ENCODE measurements at regions of chr6 and their contacts with region 1.

Region 1: GRCh38 chr6:12289933-12290820 is at the start of gene EDN1:
- DNase-seq: peak; percentile 84
- ATAC-seq: peak; percentile 88
- H3K4me3 ChIP-seq: peak within 1 kb of the TSS; percentile 74
- H3K27ac ChIP-seq: peak within 1 kb of the TSS; percentile 83
- H3K4me1 ChIP-seq: peaks cover 12% of the 10 kb centered on the region
- H3K27me3 ChIP-seq: no peaks in the 10 kb centered on the region
- CTCF ChIP-seq: peak; percentile 45
- POLR2A ChIP-seq: peak; percentile 89
- RAD21 ChIP-seq: peak; percentile 52
- total RNA-seq, gene EDN1: 5.6 and 8.6 TPM in 2 replicates

Region 2: GRCh38 chr6:10999994-11000393 is 1290.2 kb before region 1 on chr6:
- CTCF ChIA-PET with region 1: no interaction called
- POLR2A ChIA-PET with region 1: no interaction called
- dilution Hi-C with region 1: no loop called
- in situ Hi-C with region 1: no loop called
- intact Hi-C with region 1: no loop called
- DNase-seq: peak; percentile 90
- ATAC-seq: peak; percentile 92
- H3K4me3 ChIP-seq: no peak overlapping the region
- H3K27ac ChIP-seq: no peak overlapping the region
- H3K4me1 ChIP-seq: no peaks in the 10 kb centered on the region; the same call in 1 of the 2 replicates
- H3K27me3 ChIP-seq: no peaks in the 10 kb centered on the region
- CTCF ChIP-seq: no peak
- POLR2A ChIP-seq: no peak
- RAD21 ChIP-seq: no peak

Region 3: GRCh38 chr6:11770546-11771466 is 519.4 kb before region 1 on chr6:
- CTCF ChIA-PET with region 1: no interaction called
- POLR2A ChIA-PET with region 1: no interaction called
- dilution Hi-C with region 1: no loop called
- in situ Hi-C with region 1: no loop called
- intact Hi-C with region 1: loop called (anchors 5 kb)
- DNase-seq: peak; percentile 100
- ATAC-seq: peak; percentile 81
- H3K4me3 ChIP-seq: no peak overlapping the region
- H3K27ac ChIP-seq: peak overlapping the region; percentile 81
- H3K4me1 ChIP-seq: peaks cover 36% of the 10 kb centered on the region
- H3K27me3 ChIP-seq: no peaks in the 10 kb centered on the region
- CTCF ChIP-seq: no peak
- POLR2A ChIP-seq: peak; percentile 74; the same call in 1 of the 2 replicates
- RAD21 ChIP-seq: no peak; the same call in none of the 2 replicates

Region 4: DNA sequence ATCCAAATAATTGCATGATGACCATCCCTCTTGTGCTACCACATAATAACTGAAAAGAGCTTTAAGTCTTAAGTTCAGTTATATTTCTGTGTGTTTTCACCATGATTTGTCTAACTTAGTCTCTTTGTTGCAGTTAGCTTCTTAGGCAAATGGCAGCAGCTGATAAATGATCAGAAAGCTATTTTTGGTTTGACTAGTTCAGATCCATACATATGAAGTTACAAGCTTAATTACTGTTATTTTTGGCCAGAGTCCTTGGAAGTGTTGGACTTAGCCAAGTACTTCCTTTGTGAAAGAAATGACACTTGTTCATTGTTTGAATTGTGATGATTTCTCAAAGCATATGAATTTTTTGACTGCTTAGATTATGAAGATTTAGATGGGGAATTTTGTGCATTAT is 223.9 kb before region 1 on chr6:
- CTCF ChIA-PET with region 1: no interaction called
- POLR2A ChIA-PET with region 1: no interaction called
- dilution Hi-C with region 1: no loop called
- in situ Hi-C with region 1: no loop called
- intact Hi-C with region 1: no loop called
- DNase-seq: peak; percentile 19
- ATAC-seq: no peak
- H3K4me3 ChIP-seq: no peak overlapping the region
- H3K27ac ChIP-seq: no peak overlapping the region
- H3K4me1 ChIP-seq: peaks cover 11% of the 10 kb centered on the region
- H3K27me3 ChIP-seq: no peaks in the 10 kb centered on the region
- CTCF ChIP-seq: no peak
- POLR2A ChIP-seq: no peak
- RAD21 ChIP-seq: no peak

Region 5: DNA sequence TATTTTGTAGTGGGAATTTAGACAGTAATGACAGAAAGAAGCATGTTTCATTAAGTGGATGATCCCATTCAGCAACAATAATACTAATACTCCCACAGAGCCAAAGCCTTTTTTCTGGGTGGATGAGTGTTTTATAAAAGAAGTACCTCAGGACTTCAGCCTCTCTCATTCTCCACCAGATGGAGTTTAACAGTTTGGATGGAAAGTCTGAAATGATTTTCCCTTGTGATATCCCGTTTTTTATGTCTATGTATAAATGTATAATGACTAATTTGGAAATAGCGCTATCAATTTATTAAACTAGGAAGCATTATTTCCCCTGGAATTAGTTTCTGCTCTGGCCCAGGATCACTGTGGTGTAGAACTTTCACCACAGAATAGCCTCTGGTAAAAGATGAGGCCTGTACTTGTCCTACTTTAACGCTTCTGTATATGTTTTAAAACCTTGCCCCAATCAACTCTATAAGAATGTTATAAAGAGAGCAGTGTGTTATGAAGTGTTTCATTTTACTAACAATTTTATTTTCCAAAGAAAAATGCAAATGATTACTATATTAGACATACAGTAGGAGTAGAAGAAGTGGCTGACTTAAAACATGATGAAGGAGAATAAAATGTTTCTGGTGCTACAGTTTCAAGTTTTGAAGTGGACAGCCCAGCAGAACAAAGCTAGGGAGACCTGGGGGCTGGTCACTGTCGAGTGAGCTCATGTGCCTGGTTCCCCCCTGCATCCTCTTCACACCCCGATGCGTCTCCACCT is 142.4 kb before region 1 on chr6:
- CTCF ChIA-PET with region 1: interaction called, 4 read pairs
- POLR2A ChIA-PET with region 1: no interaction called
- dilution Hi-C with region 1: no loop called
- in situ Hi-C with region 1: no loop called
- intact Hi-C with region 1: loop called (anchors 5 kb)
- DNase-seq: peak; percentile 37
- ATAC-seq: peak; percentile 36
- H3K4me3 ChIP-seq: no peak overlapping the region
- H3K27ac ChIP-seq: peak overlapping the region; percentile 51; the same call in 1 of the 2 replicates
- H3K4me1 ChIP-seq: peaks cover 12% of the 10 kb centered on the region
- H3K27me3 ChIP-seq: no peaks in the 10 kb centered on the region
- CTCF ChIP-seq: peak; percentile 30; the same call in 1 of the 2 replicates
- POLR2A ChIP-seq: no peak
- RAD21 ChIP-seq: peak; percentile 18; the same call in 1 of the 2 replicates

Region 6: GRCh38 chr6:12504319-12504966 is 214.3 kb after region 1 on chr6:
- CTCF ChIA-PET with region 1: no interaction called
- POLR2A ChIA-PET with region 1: no interaction called
- dilution Hi-C with region 1: no loop called
- in situ Hi-C with region 1: no loop called
- intact Hi-C with region 1: loop called (anchors 10 kb)
- DNase-seq: peak; percentile 14
- ATAC-seq: peak; percentile 44; the same call in 1 of the 2 replicates
- H3K4me3 ChIP-seq: no peak overlapping the region
- H3K27ac ChIP-seq: no peak overlapping the region
- H3K4me1 ChIP-seq: no peaks in the 10 kb centered on the region
- H3K27me3 ChIP-seq: no peaks in the 10 kb centered on the region
- CTCF ChIP-seq: peak; percentile 35
- POLR2A ChIP-seq: no peak
- RAD21 ChIP-seq: peak; percentile 46; the same call in 1 of the 2 replicates

Region 7: GRCh38 chr6:12890171-12890790 is 600.1 kb after region 1 on chr6:
- CTCF ChIA-PET with region 1: no interaction called
- POLR2A ChIA-PET with region 1: no interaction called
- dilution Hi-C with region 1: no loop called
- in situ Hi-C with region 1: no loop called
- intact Hi-C with region 1: loop called (anchors 10 kb)
- DNase-seq: no peak
- ATAC-seq: no peak
- H3K4me3 ChIP-seq: no peak overlapping the region
- H3K27ac ChIP-seq: no peak overlapping the region
- H3K4me1 ChIP-seq: no peaks in the 10 kb centered on the region
- H3K27me3 ChIP-seq: no peaks in the 10 kb centered on the region
- CTCF ChIP-seq: peak; percentile 22; the same call in 1 of the 2 replicates
- POLR2A ChIP-seq: no peak
- RAD21 ChIP-seq: no peak

Measured in IMR-90 (cell line).